Activated CD8-positive, alpha-beta T cell treated with anti-CD3 and anti-CD28 coated beads for 36 hours (primary cell): ENCODE measurements at regions of chr6 and their contacts with region 1.

Region 1: GRCh38 chr6:42390228-42390934 is 61.3 kb downstream of the TRERF1 start:
- DNase-seq: peak; percentile 83
- ATAC-seq: peak; percentile 82
- H3K4me3 Mint-ChIP-seq: peak overlapping the region; percentile 73
- H3K27ac Mint-ChIP-seq: peak overlapping the region; percentile 96
- H3K4me1 Mint-ChIP-seq: peaks cover 95% of the 10 kb centered on the region
- H3K27me3 Mint-ChIP-seq: no peaks in the 10 kb centered on the region
- CTCF ChIP-seq: no peak

Region 2: DNA sequence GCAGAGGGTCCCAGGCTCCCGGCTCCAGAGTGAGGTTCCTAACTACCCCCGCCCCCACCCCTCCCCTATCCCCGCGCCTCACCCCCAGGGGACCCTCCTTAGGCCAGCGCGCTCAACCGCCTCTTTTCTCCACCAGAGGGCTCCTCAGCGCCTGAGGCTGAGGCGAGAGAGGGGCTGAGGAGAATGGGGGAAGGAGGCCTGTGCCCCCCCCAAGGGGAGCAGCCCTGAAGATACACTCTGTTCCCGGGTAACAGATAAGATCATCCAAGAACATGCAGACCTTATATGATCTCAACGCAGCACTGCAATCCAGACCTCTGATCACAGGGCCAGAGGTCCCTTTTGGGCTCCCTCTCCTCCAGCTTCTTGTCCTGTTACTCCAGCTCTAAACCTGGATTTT is 129.4 kb before region 1 on chr6:
- CTCF ChIA-PET with region 1: interaction called, 11 read pairs
- POLR2A ChIA-PET with region 1: interaction called, 3 read pairs
- intact Hi-C with region 1: no loop called
- DNase-seq: peak; percentile 54
- ATAC-seq: peak; percentile 88
- H3K4me3 Mint-ChIP-seq: no peak overlapping the region
- H3K27ac Mint-ChIP-seq: no peak overlapping the region
- H3K4me1 Mint-ChIP-seq: peaks cover 2% of the 10 kb centered on the region
- H3K27me3 Mint-ChIP-seq: no peaks in the 10 kb centered on the region
- CTCF ChIP-seq: peak; percentile 76

Region 3: GRCh38 chr6:42367353-42368011 is 22.9 kb before region 1 on chr6:
- CTCF ChIA-PET with region 1: interaction called, 11 read pairs
- POLR2A ChIA-PET with region 1: interaction called, 47 read pairs
- intact Hi-C with region 1: no loop called
- DNase-seq: peak; percentile 40
- ATAC-seq: peak; percentile 50
- H3K4me3 Mint-ChIP-seq: peak overlapping the region; percentile 69
- H3K27ac Mint-ChIP-seq: peak overlapping the region; percentile 93
- H3K4me1 Mint-ChIP-seq: peaks cover 59% of the 10 kb centered on the region
- H3K27me3 Mint-ChIP-seq: no peaks in the 10 kb centered on the region
- CTCF ChIP-seq: no peak

Region 4: DNA sequence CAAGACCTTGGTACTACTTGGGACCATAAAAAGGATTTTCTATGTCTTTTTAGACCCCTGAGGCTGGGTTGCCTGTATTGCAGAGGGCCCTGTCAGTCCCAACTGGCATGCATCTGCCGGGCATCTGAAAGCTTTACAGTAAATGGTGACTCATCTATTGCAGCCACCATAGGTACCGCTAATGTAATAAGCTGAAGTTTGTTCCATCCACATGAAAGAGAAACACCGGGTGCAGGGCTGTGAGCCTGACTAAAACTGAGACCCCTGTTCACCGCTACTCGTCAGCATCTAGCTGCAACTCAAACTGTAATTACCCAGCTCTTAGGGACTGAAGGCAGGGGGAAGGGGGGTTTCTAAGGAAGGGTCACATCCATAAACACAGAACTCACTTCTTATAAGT is 11.8 kb after region 1 on chr6:
- CTCF ChIA-PET with region 1: interaction called, 15 read pairs
- POLR2A ChIA-PET with region 1: interaction called, 77 read pairs
- intact Hi-C with region 1: no loop called
- DNase-seq: peak; percentile 84
- ATAC-seq: peak; percentile 85
- H3K4me3 Mint-ChIP-seq: no peak overlapping the region
- H3K27ac Mint-ChIP-seq: peak overlapping the region; percentile 56
- H3K4me1 Mint-ChIP-seq: peaks cover 69% of the 10 kb centered on the region
- H3K27me3 Mint-ChIP-seq: no peaks in the 10 kb centered on the region
- CTCF ChIP-seq: no peak

Region 5: GRCh38 chr6:42453031-42453653 is 62.8 kb after region 1 on chr6:
- CTCF ChIA-PET with region 1: interaction called, 9 read pairs
- POLR2A ChIA-PET with region 1: interaction called, 72 read pairs
- intact Hi-C with region 1: loop called (anchors 10 kb)
- DNase-seq: peak; percentile 82
- ATAC-seq: peak; percentile 72
- H3K4me3 Mint-ChIP-seq: peak overlapping the region; percentile 97
- H3K27ac Mint-ChIP-seq: peak overlapping the region; percentile 85
- H3K4me1 Mint-ChIP-seq: peaks cover 34% of the 10 kb centered on the region
- H3K27me3 Mint-ChIP-seq: peaks cover 4% of the 10 kb centered on the region
- CTCF ChIP-seq: no peak

Region 6: GRCh38 chr6:42539135-42539534 is 148.8 kb after region 1 on chr6:
- CTCF ChIA-PET with region 1: no interaction called
- POLR2A ChIA-PET with region 1: no interaction called
- intact Hi-C with region 1: no loop called
- DNase-seq: no peak
- ATAC-seq: no peak
- H3K4me3 Mint-ChIP-seq: no peak overlapping the region
- H3K27ac Mint-ChIP-seq: no peak overlapping the region
- H3K4me1 Mint-ChIP-seq: no peaks in the 10 kb centered on the region
- H3K27me3 Mint-ChIP-seq: no peaks in the 10 kb centered on the region
- CTCF ChIP-seq: no peak